ENCODE measurements at regions of chr10 and their contacts with region 1.

Region 1: GRCh38 chr10:91247360-91248111 is 27.1 kb downstream of the PCGF5 start:
- DNase-seq: no peak
- CTCF ChIP-seq: no peak

Region 2: GRCh38 chr10:90912174-90912573 is 335.4 kb before region 1 on chr10:
- in situ Hi-C with region 1: loop called (anchors 10 kb)
- DNase-seq: no peak
- CTCF ChIP-seq: no peak

Region 3: DNA sequence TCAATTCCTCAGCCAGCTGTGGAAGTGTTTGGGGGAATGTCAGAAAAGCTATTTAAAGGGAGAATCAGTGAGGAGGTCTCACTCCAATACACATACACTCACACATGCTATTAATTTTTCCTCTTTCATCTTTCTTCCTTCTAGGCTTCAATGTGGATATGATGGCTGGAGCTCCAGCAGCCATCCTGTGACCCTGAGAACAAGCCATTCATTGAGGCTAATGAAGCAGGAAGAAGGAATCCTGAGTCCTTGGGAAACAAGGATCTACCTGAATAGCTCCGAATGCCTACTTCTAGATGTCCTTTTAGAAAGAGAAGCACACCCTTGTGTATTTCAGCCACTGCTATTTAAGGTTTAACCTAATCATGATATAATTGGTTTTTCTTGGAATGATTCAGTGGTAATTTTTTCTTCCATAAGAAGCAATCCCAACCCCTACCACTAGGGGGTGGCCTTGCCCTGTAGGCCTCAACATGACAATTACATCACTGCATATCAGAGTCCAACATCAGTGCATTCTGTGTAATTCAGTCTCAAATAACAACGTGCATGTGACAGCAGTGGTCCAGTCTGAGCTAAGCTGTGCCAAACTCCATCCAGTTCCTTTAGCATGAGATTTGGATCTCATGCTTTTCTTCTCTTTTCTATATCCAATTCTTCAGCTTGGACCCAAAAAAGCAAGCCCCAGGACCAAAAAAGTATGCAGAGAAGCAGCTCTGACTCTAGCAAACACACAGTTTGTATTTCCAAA is 241.4 kb before region 1 on chr10:
- in situ Hi-C with region 1: loop called (anchors 10 kb)
- DNase-seq: no peak
- CTCF ChIP-seq: peak; percentile 68

Measured in GM13976 (cell line).